ENCODE measurements at regions of chr6 and their contacts with region 1.

Region 1: DNA sequence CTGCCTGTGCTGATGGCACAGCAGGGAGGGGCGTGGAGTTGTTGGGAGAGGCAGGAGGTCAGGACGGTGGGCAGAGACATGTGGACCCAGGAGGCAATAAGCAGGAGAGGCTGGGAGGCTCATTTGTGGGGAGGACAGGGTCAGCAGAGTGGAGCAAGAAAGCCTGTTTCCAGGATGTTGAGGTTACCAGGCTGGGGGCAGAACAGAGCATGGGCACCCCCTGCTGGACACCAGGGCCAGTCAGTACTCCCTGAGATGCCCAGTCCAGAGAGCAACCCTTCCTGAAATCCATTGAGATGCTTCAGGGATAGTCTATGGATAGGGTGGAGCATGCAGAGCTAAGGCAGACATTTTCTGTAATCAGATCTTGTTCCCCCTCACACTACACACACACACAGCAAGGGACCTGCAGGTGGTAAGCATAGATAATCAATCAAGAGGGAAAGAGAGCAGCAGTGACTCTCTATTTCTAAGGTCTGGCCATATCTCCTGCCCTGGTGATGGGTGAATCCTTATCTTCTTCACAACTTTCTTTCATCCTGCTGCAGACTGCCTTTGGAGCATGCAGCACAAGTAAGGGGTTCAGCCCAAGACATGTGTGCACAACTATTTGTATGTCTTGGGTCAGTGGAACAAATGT is 41.7 kb downstream of the MOCS1 start:
- DNase-seq: peak; percentile 81 to 93
- ATAC-seq: peak; percentile 90
- H3K4me3 ChIP-seq: no peak overlapping the region
- H3K27ac ChIP-seq: peak overlapping the region in 1 of 2 donors; percentile 15
- H3K4me1 ChIP-seq: no peaks in the 10 kb centered on the region
- H3K27me3 ChIP-seq: no peaks in the 10 kb centered on the region

Region 2: DNA sequence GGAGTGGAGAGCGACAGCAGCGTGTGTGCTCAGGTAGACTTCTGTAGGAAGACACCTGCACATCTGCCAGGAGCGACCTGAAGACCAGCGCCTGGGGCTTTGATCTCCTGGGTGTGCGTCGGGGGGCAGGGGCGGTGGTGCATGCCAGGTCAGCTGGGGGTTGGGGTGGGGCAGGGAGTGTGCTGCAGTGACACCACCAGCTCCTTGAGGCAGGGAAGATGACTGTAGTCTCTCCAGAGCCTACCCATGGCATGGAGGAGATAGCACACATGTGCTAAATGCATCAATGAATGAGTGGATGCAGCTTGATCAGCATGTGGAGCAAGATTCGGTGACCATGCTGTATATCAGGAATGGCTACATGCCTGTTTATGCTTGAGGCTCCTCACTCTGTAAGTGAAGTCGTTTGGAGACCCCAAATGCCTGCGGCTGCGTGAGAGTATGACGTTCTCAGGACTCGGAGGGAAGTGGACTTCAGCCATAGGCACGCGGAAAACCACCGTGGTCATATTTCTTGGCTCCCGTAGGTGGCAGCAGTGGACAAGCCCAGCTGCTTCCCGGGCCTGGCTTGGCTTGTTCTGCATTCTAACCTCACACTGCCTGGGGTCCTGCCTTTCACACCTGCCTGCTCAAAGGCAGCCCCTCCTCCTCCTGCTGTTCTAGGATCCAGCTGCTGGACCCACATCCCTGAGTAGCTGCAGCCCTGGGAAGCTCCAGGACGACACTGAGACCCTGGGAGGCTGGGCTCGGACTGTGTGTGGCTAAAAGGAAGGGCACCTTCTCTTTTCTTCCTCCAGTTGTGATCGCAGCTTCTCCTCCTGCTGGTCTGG is 530.7 kb before region 1 on chr6:
- intact Hi-C with region 1: loop called in 1 of 2 experiments (anchors 5 kb)
- DNase-seq: peak in 1 of 2 donors; percentile 74
- ATAC-seq: peak; percentile 84
- H3K4me3 ChIP-seq: no peak overlapping the region
- H3K27ac ChIP-seq: no peak overlapping the region
- H3K4me1 ChIP-seq: no peaks in the 10 kb centered on the region
- H3K27me3 ChIP-seq: no peaks in the 10 kb centered on the region

Region 3: DNA sequence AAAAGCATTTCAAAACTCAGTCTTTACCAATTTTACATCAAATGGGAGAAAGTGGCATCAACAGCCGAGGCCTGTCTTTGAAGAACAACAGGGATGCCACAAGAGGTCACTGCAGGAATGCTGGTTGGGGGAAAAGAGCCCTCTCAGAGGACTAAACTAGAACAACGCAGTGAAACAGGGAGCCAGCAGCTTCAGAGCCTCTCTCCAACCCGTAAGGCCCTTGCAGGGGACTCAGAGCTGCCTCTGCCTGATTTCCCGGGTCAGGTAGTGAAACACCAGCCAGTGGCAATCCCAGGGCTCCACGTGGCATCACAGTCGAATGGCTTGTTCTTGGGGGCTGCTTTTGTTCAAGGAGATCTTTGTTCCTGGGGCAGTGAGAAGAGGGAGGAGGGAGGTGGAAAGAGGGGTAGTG is 515.1 kb before region 1 on chr6:
- intact Hi-C with region 1: loop called (anchors 2 to 5 kb)
- DNase-seq: no peak
- ATAC-seq: peak; percentile 77
- H3K4me3 ChIP-seq: no peak overlapping the region
- H3K27ac ChIP-seq: no peak overlapping the region
- H3K4me1 ChIP-seq: no peaks in the 10 kb centered on the region
- H3K27me3 ChIP-seq: no peaks in the 10 kb centered on the region

Region 4: DNA sequence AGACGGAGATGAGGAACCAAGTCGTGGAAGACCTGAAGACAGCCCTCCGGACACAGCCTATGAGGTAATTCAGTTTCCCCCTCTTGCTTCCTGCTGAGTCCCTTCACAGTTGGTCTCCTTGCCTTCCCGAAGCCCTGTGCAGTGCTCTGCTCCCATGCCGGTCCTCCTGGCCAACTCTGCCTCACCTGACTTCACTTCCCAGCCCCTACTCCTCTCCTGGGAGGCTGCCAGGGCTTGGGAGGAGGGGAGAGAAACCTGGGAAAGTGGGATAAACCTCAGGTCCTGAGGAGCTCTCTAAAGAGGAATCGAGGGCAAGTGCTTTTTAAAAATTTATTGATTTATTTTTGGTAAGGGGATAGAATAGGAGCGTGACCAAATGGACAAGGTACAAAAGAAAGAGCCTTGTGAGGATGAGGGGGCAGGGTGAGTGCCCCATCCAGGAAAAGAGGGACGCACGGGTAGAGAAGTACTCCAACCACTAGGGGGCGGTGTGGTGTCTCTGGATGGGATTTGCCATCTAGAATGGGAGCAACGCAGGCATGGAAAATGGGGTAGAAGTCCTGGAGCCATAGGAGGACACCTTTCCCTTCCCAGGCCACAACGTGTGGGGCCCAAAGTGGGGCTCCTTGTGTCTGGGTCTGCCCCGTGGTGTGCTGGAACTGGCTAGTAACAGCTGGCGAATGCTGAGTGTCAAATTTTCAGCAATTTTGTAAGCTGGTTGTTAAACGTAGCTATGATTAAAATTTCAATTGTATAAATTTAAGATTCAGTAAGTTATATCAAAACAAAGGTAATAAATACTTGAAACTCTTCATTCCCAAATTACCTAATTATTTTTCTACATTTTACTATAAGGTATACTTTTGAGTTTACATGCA is 27.4 kb before region 1 on chr6:
- intact Hi-C with region 1: loop called in 1 of 2 experiments (anchors 2 kb)
- DNase-seq: peak; percentile 87 to 92
- ATAC-seq: peak; percentile 69
- H3K4me3 ChIP-seq: no peak overlapping the region
- H3K27ac ChIP-seq: no peak overlapping the region
- H3K4me1 ChIP-seq: no peaks in the 10 kb centered on the region
- H3K27me3 ChIP-seq: no peaks in the 10 kb centered on the region

Measured in aorta (tissue), 5 donors.